HCT116 (cell line): ENCODE measurements at regions of chr16 and their contacts with region 1.

Region 1: DNA sequence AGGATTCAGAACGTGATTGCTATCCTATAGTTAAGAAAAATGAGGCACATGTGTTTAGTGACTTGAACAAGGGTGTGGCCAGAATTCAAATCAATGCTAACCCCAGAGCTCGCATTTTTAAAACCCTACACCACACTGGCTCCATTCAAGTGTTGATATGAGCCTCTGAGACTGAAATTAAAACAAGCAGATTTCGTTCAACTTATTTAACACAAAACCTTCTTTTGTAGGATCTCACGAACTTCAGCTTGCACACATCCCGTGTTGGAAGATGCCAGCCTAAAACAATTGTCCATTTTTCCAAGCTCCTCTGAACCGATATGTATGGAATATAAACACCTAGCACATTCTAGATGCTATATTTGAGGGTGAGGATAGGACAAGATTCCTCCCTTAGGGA is 231.0 kb upstream of the IRX5 start:
- DNase-seq: no peak
- ATAC-seq: no peak
- H3K4me3 ChIP-seq: no peak overlapping the region
- H3K27ac ChIP-seq: no peak overlapping the region
- H3K4me1 ChIP-seq: no peaks in the 10 kb centered on the region
- H3K27me3 ChIP-seq: peaks cover 38% of the 10 kb centered on the region
- CTCF ChIP-seq: no peak
- POLR2A ChIP-seq: no peak
- RAD21 ChIP-seq: no peak

Region 2: DNA sequence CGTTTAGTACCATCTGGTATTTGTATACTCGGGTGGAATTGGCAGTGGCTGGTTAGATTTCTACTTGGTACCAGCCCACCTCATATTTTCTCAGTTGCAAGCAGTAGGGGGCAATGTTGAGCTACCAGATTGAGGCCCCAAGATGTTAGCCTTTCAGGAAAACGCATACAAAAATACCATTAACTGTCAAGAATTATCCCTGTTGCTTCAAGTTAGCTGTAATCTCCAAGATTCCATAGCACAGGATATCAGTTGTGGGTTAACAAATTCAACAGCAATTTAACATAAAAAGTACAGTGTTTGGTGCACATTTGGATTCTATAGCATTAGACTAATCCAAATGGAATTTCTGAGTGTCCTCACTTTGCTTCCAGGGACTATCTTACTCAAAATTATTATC is 807.5 kb before region 1 on chr16:
- CTCF ChIA-PET with region 1: no interaction called
- POLR2A ChIA-PET with region 1: no interaction called
- RAD21 ChIA-PET with region 1: no interaction called
- intact Hi-C with region 1: no loop called
- DNase-seq: peak; percentile 22
- ATAC-seq: peak; percentile 81
- H3K4me3 ChIP-seq: no peak overlapping the region
- H3K27ac ChIP-seq: no peak overlapping the region
- H3K4me1 ChIP-seq: no peaks in the 10 kb centered on the region
- H3K27me3 ChIP-seq: no peaks in the 10 kb centered on the region
- CTCF ChIP-seq: peak; percentile 21 to 79 (median 72); a peak in 5 of 6 replicates
- POLR2A ChIP-seq: no peak
- RAD21 ChIP-seq: peak; percentile 71

Region 3: DNA sequence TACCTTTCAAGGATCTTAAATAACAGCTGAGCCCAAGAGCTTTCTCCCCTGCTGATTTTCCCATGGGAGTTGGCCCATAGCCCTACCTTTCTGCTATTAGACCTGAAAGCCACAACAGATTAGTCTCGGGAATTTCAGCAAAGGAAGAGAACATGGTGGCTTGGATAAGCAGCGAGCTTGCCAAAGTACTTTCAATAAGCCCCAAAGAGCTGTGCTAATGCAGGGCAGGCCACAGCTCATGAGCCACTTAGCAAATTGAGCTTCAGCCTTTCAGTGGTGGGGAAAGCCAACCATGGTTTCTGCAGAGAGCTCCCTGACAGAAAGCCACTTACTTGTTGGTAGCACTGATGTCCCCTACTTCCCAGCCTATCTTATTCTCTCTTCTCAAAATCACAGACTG is 13.2 kb after region 1 on chr16:
- CTCF ChIA-PET with region 1: no interaction called
- POLR2A ChIA-PET with region 1: no interaction called
- RAD21 ChIA-PET with region 1: no interaction called
- intact Hi-C with region 1: loop called (anchors 1 kb)
- DNase-seq: no peak
- ATAC-seq: no peak
- H3K4me3 ChIP-seq: no peak overlapping the region
- H3K27ac ChIP-seq: no peak overlapping the region
- H3K4me1 ChIP-seq: no peaks in the 10 kb centered on the region
- H3K27me3 ChIP-seq: peaks cover 31% of the 10 kb centered on the region
- CTCF ChIP-seq: no peak
- POLR2A ChIP-seq: no peak
- RAD21 ChIP-seq: no peak

Region 4: DNA sequence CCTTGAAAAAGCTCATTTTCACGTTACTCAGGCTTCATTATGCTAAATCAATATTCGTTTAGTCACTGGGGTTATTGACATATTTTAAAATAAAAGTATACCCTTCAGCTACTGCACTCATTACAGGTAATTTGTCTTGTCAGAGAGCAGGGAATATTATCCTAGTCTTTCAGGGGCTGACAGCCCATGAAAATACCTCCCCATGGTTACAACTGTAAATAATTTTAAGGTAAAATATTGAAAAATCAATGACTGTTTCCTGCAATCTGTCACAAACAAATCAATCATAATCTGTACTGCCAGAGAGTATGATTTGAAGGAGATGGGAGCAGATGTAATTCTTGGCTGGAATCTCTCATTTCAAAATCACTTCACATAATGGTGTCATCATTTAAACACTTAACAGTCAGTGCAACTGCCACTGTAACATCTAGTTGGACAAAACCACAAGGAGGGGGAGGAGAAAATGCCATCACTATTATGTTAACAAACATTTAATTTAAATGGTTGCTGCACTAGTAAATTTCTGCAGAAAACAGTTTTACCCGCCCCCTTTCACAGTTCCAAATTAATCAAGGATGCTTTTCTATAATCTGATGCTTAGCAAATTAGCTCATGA is 221.7 kb after region 1 on chr16:
- CTCF ChIA-PET with region 1: no interaction called
- POLR2A ChIA-PET with region 1: no interaction called
- RAD21 ChIA-PET with region 1: no interaction called
- intact Hi-C with region 1: no loop called
- DNase-seq: no peak
- ATAC-seq: no peak
- H3K4me3 ChIP-seq: no peak overlapping the region
- H3K27ac ChIP-seq: no peak overlapping the region
- H3K4me1 ChIP-seq: no peaks in the 10 kb centered on the region
- H3K27me3 ChIP-seq: peaks cover 3% of the 10 kb centered on the region
- CTCF ChIP-seq: no peak
- POLR2A ChIP-seq: no peak
- RAD21 ChIP-seq: no peak